Activated T-helper 1 cell treated with anti-CD3 and anti-CD28 coated beads, Interleukin-12 subunit alpha, Interleukin-12 subunit beta, Interleukin-2, Interleukin-4 antibody, amounts not matched to agents 30 ng/mL and 10 ng/mL and 1 ng/mL, durations not matched to agents 14 hours and 24 hours and 36 hours (primary cell): ENCODE measurements at regions of chr12 and their contacts with region 1.

Region 1: GRCh38 chr12:109880016-109880931 is at the start of gene GLTP:
- DNase-seq: peak; percentile 91
- H3K4me3 Mint-ChIP-seq: peak within 1 kb of the TSS; percentile 95
- H3K27ac Mint-ChIP-seq: peak within 1 kb of the TSS; percentile 87
- H3K4me1 Mint-ChIP-seq: peaks cover 29% of the 10 kb centered on the region
- H3K27me3 Mint-ChIP-seq: peaks cover 10% of the 10 kb centered on the region
- total RNA-seq, gene GLTP: 27.7 and 29.1 TPM in 2 replicates

Region 2: DNA sequence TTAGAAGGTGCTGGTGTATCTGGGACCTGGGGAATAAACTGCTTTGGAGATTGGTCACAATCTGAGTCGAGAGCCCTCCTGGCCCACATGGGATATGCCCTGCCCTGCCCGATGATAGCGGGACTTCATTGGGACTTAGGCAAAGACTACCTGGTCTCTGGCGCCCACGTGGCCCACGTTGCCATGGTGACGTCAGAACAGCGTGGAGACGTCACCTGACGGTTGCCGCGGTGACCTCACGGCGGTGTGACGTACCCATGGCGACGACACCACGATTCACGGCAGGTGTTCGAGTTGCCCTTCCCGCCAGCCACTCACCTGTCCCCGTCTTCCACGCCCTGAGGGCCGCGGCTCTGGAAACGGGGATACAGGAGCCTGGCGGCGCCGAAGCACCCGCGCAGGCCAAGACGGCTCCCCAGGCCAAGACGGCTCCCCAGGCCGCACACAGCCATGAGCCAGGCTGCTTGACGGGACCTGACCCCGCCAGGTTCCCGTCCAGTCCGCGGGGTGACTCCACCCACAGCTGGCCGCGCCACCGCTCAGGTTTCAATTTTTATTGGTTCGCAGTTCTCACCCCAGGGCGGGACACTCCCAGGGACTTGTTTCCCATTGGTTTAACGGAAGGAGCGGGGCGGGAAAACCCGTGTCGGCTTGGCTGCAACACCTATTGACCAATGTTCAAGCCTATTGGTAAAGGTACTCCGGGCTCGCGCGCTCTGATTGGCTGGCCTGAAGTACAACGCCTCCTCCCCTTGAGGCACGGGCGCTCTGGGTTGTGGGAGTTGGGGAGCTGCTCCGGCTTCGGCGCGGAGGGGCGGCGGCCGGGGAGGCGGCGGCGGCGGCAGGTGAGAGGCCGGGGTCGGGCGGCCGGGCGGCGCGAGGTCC is 307.0 kb before region 1 on chr12 and contains the starts of genes MMAB and MVK:
- intact Hi-C with region 1: loop called (anchors 1 kb)
- DNase-seq: peak; percentile 99
- H3K4me3 Mint-ChIP-seq: peak within 1 kb of the TSS; percentile 91
- H3K27ac Mint-ChIP-seq: peak within 1 kb of the TSS; percentile 88
- H3K4me1 Mint-ChIP-seq: peaks cover 30% of the 10 kb centered on the region
- H3K27me3 Mint-ChIP-seq: no peaks in the 10 kb centered on the region
- total RNA-seq, gene MMAB: 41.9 and 42.2 TPM in 2 replicates
- total RNA-seq, gene MVK: 14.2 and 15.8 TPM in 2 replicates

Region 3: DNA sequence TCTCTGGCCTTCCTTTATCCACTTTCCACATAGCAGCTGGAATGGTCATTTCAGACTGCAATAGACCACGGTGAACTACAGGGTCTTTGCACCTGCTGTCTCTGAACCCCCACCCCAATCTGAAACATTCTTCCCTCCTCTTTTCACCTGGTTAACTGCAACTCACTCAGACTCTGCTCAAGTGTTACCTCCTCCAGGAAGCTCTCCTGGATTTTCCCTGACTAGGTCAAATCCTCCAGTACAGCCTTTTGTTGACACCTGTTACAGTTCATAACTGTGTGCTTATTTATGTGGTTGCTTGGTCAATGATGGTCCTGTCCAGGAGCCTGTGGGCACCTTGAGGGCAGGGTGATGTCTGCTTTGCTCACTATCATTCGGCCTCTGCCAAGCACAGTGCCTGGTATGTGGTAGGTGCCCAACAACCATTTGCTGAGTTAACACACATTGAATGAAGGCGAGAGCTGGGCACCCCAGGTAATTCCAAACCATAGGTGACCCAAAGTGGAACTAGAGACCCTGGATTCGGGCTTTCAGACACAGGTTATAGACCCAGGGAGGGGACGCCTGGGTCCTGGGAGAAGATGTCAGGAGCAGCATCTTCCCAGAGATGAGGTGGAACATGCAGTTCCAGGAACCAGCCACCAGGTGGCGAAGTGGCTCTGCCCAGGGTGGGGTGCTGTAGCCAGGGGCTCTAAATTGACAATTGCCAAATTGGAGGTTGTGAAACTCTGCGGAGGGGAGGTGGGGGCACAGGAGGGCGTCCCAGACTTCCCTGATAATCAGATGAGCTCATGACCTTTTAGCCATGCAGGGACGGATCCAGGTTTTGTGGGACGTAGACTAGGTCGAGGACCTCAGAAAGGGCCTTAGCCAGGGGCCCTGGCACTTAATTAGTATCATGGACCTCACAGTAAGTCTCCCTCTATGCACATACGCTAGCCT is 75.2 kb before region 1 on chr12:
- intact Hi-C with region 1: loop called (anchors 1 kb)
- DNase-seq: peak; percentile 48
- H3K4me3 Mint-ChIP-seq: no peak overlapping the region
- H3K27ac Mint-ChIP-seq: no peak overlapping the region
- H3K4me1 Mint-ChIP-seq: no peaks in the 10 kb centered on the region
- H3K27me3 Mint-ChIP-seq: peaks cover 2% of the 10 kb centered on the region

Region 4: DNA sequence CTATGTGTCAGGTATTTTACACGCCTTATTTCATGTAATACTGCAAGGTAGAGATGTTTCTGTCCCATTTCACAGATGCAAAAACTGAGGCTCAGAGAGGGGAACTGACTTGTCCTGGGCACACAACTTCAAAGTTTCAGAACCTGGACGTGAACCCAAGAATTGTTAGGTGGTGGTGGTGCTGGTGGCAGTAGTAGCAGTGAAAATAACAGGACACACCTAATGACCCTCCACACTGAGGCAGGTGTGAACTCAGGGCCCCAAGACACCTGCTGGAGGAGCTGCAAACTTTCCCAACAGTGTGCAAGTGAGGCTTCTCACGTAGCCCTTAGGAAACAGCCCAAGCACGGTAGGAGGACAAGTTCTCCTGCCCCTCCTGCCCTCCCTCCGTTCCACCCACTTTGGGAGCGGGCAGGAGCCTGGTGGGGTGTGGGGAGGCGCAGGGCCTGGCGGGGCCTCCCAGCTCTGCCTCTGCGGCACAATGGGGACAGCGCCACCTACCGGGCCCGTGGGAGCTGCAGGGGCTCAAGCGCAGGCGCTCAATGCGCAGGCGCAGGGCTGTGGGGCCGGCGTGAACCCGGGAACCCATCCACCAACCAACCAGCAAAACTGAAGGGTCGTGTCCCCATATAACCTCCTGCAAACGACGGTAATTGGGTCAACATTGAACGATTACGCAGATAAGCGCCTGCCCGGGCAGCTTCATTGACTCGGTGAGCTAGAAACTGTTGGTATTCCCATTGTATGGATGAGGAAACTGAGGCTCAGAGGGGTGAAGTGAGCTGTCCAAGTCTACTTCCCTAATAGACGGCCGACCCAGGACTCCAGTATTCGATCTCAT is 35.1 kb before region 1 on chr12:
- intact Hi-C with region 1: loop called (anchors 1 kb)
- DNase-seq: peak; percentile 85
- H3K4me3 Mint-ChIP-seq: peak overlapping the region; percentile 37
- H3K27ac Mint-ChIP-seq: no peak overlapping the region
- H3K4me1 Mint-ChIP-seq: peaks cover 5% of the 10 kb centered on the region
- H3K27me3 Mint-ChIP-seq: no peaks in the 10 kb centered on the region

Region 5: GRCh38 chr12:109858764-109859163 is 21.5 kb before region 1 on chr12:
- intact Hi-C with region 1: loop called (anchors 1 kb)
- DNase-seq: no peak
- H3K4me3 Mint-ChIP-seq: no peak overlapping the region
- H3K27ac Mint-ChIP-seq: no peak overlapping the region
- H3K4me1 Mint-ChIP-seq: peaks cover 6% of the 10 kb centered on the region
- H3K27me3 Mint-ChIP-seq: no peaks in the 10 kb centered on the region

Region 6: GRCh38 chr12:109899783-109900751 is 19.8 kb after region 1 on chr12 and contains the start of gene TCHP:
- intact Hi-C with region 1: loop called (anchors 1 kb)
- DNase-seq: peak; percentile 69
- H3K4me3 Mint-ChIP-seq: peak within 1 kb of the TSS; percentile 95
- H3K27ac Mint-ChIP-seq: peak within 1 kb of the TSS; percentile 94
- H3K4me1 Mint-ChIP-seq: peaks cover 19% of the 10 kb centered on the region
- H3K27me3 Mint-ChIP-seq: no peaks in the 10 kb centered on the region
- total RNA-seq, gene TCHP: 30.4 and 31.1 TPM in 2 replicates

Region 7: GRCh38 chr12:109951751-109952150 is 71.5 kb after region 1 on chr12:
- intact Hi-C with region 1: no loop called
- DNase-seq: no peak
- H3K4me3 Mint-ChIP-seq: no peak overlapping the region
- H3K27ac Mint-ChIP-seq: peak overlapping the region; percentile 69
- H3K4me1 Mint-ChIP-seq: peaks cover 35% of the 10 kb centered on the region
- H3K27me3 Mint-ChIP-seq: no peaks in the 10 kb centered on the region